ENCODE measurements at regions of chr3 and their contacts with region 1.

Region 1: GRCh38 chr3:99753268-99753975 is 64.2 kb upstream of the CMSS1 start:
- DNase-seq: peak; percentile 13 to 54
- ATAC-seq: peak; percentile 91
- H3K4me3 ChIP-seq: no peak overlapping the region
- H3K27ac ChIP-seq: no peak overlapping the region
- H3K4me1 ChIP-seq: no peaks in the 10 kb centered on the region
- CTCF ChIP-seq: peak; percentile 83
- EP300 ChIP-seq: no peak
- POLR2A ChIP-seq: no peak
- RAD21 ChIP-seq: peak; percentile 84 to 86

Region 2: DNA sequence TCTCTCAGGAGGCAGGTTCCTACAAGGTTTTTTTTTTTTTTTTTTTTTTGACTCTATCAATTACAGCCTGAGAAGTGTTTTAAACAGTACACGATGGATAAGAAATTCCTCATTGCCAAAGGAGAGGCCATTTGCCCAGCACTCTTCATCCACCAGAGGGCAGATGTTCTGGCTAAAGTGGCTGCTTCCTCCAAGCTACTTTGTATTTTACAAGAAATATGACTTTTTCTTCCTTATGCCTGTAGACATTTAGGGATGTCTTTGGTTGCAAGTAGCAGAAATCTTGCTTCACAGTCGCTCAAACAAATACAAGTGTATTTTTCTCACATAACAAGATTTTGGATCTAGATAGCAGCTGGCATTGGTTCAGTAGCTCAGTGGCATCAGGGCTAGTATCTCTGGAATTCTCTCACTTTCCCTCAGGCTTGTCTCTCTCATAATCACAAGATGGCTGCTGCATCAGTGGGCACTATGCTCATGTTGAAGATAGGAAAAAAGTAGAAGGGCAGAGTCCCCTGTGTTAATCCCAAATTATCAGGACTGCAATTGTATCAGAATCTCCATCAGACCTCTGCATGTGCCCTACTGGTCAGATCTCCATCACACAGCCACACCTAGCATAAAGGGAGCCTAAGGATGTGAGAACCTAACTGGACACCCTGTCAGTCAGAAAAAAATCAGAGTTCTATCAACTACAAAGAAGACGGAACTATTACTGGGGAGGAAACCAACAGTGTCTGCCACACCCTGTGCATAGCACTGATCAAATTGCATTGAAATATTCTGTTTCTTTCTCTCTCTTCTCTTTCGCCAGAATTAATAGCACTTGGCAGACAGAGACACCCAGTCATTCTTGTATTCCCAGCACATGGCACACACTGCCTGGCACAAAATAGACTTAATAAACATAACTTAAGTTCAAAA is 253.9 kb before region 1 on chr3:
- CTCF ChIA-PET with region 1: interaction called, 69 read pairs
- POLR2A ChIA-PET with region 1: no interaction called
- DNase-seq: peak; percentile 11 to 37
- ATAC-seq: peak; percentile 71 to 88; a peak in 4 of 6 replicates
- H3K4me3 ChIP-seq: no peak overlapping the region
- H3K27ac ChIP-seq: no peak overlapping the region
- H3K4me1 ChIP-seq: no peaks in the 10 kb centered on the region
- CTCF ChIP-seq: peak; percentile 64
- EP300 ChIP-seq: no peak
- POLR2A ChIP-seq: no peak
- RAD21 ChIP-seq: peak; percentile 48 to 51; a peak in 4 of 5 replicates

Region 3: GRCh38 chr3:99714146-99714545 is 39.3 kb before region 1 on chr3:
- CTCF ChIA-PET with region 1: no interaction called
- POLR2A ChIA-PET with region 1: no interaction called
- DNase-seq: no peak
- ATAC-seq: no peak
- H3K4me3 ChIP-seq: no peak overlapping the region
- H3K27ac ChIP-seq: no peak overlapping the region
- H3K4me1 ChIP-seq: no peaks in the 10 kb centered on the region
- CTCF ChIP-seq: no peak
- EP300 ChIP-seq: no peak
- POLR2A ChIP-seq: no peak
- RAD21 ChIP-seq: no peak

Region 4: DNA sequence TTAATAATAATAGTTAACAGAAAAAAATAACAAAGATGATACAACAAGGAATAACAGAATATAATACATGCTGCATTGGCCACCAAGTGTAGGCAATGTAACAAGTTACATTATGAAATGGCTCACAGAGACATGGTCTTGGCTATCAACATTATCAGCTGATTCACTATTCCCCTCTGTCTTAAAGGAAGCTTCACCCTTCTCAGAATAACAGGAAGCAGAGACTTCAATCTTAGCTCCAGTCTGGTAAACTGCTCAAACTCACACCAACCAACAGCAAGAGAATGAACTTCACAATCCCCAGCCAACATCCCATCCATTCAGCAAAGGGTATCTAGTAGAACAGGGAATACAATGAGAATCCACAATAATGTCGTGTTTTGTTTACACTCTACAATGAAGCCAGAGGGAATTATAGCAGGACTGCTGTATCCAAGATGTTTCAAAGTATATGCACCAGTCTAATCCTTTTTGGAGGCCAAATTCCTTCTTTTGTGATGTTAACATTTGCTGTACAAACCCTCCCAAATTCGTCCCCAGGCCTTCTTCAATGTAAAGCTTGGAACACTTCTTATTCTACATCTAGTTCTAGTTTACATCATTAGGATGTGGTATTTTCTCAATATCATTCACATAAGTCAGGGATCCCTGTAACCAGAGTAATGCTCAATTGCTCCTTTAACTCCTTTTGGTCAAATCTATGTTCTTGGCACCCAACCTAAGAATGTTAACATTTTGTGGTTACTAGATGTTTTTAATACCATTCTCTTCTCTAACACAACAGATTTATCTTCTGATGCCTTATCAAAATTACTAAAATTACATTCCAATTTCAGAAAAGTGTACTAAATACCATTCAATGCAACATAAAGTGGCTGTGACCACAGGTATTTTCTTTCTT is 11.9 kb after region 1 on chr3:
- CTCF ChIA-PET with region 1: interaction called, 17 read pairs
- POLR2A ChIA-PET with region 1: no interaction called
- DNase-seq: no peak
- ATAC-seq: no peak
- H3K4me3 ChIP-seq: no peak overlapping the region
- H3K27ac ChIP-seq: no peak overlapping the region
- H3K4me1 ChIP-seq: no peaks in the 10 kb centered on the region
- CTCF ChIP-seq: no peak
- EP300 ChIP-seq: no peak
- POLR2A ChIP-seq: no peak
- RAD21 ChIP-seq: no peak

Region 5: GRCh38 chr3:99859825-99860224 is 106.4 kb after region 1 on chr3:
- CTCF ChIA-PET with region 1: no interaction called
- POLR2A ChIA-PET with region 1: no interaction called
- DNase-seq: peak in 1 of 2 experiments; percentile 36
- ATAC-seq: peak; percentile 65
- H3K4me3 ChIP-seq: no peak overlapping the region
- H3K27ac ChIP-seq: peak overlapping the region in 1 of 2 experiments; percentile 18; a peak in 1 of 6 replicates
- H3K4me1 ChIP-seq: peaks cover 25% of the 10 kb centered on the region
- CTCF ChIP-seq: no peak
- EP300 ChIP-seq: no peak
- POLR2A ChIP-seq: no peak
- RAD21 ChIP-seq: no peak

Measured in A549 (cell line).